ENCODE measurements at regions of chrX and their contacts with region 1.

Region 1: GRCh38 chrX:150365051-150365989 is 2.2 kb downstream of the MAMLD1 start:
- DNase-seq: peak; percentile 39 to 73 (median 53)
- H3K4me3 ChIP-seq: peak overlapping the region; percentile 34
- H3K4me3 Mint-ChIP-seq: peak overlapping the region; percentile 81 to 91 (median 87)
- H3K27ac ChIP-seq: no peak overlapping the region
- H3K27ac Mint-ChIP-seq: peak overlapping the region in 7 of 8 donors; percentile 47 to 79 (median 61)
- H3K4me1 ChIP-seq: no peaks in the 10 kb centered on the region
- H3K4me1 Mint-ChIP-seq: peaks cover 20 to 26% (median 21%) of the 10 kb centered on the region in 3 donors
- H3K27me3 ChIP-seq: no peaks in the 10 kb centered on the region
- H3K27me3 Mint-ChIP-seq: peaks cover 0 to 7% of the 10 kb centered on the region in 2 donors

Region 2: DNA sequence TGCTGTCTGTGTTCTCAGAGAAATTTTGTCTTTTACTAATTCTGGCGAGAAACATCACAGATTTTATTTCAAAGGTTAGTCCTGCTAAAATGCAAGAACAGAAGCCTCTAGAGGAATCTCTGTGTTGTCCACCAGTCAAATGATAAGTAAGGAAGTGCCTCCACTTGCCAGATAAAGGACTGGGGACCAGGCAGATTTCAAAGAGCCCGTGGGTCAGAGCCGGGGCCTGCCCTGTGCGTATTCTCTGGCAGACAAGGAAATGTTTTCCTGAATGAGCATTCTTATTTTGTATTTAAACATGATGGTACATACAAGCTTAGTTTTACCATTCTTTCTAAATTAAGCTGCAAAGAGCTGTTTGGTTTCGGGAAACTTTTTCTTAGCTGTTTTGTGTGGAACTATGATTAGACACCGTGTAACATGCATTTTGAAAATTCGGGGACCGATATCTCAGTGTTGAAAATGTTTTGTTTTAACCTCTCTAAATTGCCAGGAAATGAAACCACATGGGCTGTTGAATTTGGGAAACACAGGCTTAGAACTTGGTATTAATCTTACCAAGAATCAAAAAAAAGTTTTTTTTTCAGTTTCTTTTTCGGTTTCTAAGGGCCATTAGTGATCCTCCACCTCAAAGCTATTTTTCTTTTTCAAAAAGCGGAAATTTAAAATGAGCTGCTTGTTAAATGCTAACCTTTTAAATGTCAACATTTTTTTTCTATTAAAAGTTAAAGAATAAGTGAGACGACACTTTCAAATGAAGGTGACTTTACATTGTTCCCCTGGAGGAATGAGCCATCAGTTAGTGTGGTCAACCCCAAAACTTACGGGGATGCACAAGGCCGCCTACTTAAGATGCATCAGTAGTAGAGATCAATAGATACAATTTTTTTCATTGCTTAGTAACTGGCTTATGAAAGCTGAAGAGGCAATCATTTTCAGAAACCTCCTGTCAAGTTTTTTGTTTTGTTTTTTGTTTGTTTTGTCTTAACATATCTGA is 113.5 kb after region 1 on chrX:
- CTCF ChIA-PET with region 1: interaction called, 16 read pairs
- POLR2A ChIA-PET with region 1: no interaction called
- DNase-seq: no peak
- H3K4me3 ChIP-seq: peak overlapping the region; percentile 22
- H3K4me3 Mint-ChIP-seq: peak overlapping the region; percentile 74 to 87 (median 80)
- H3K27ac ChIP-seq: no peak overlapping the region
- H3K27ac Mint-ChIP-seq: peak overlapping the region; percentile 39 to 93 (median 78)
- H3K4me1 ChIP-seq: peaks cover 20% of the 10 kb centered on the region
- H3K4me1 Mint-ChIP-seq: peaks cover 23 to 47% (median 38%) of the 10 kb centered on the region in 3 donors
- H3K27me3 ChIP-seq: no peaks in the 10 kb centered on the region
- H3K27me3 Mint-ChIP-seq: peaks cover 0 to 6% of the 10 kb centered on the region in 2 donors

Region 3: GRCh38 chrX:150486011-150486410 is 120.7 kb after region 1 on chrX:
- CTCF ChIA-PET with region 1: interaction called, 22 read pairs
- POLR2A ChIA-PET with region 1: no interaction called
- DNase-seq: peak; percentile 2 to 59 (median 20)
- H3K4me3 ChIP-seq: no peak overlapping the region
- H3K4me3 Mint-ChIP-seq: no peak overlapping the region
- H3K27ac ChIP-seq: no peak overlapping the region
- H3K27ac Mint-ChIP-seq: no peak overlapping the region
- H3K4me1 ChIP-seq: no peaks in the 10 kb centered on the region
- H3K4me1 Mint-ChIP-seq: peaks cover 0 to 13% (median 4%) of the 10 kb centered on the region in 3 donors
- H3K27me3 ChIP-seq: no peaks in the 10 kb centered on the region
- H3K27me3 Mint-ChIP-seq: peaks cover 0 to 4% of the 10 kb centered on the region in 2 donors